Esophagus muscularis mucosa (tissue), 4 donors: ENCODE measurements at regions of chr1 and their contacts with region 1.

Region 1: GRCh38 chr1:170664828-170665612 is 1.1 kb downstream of the PRRX1 start:
- DNase-seq: no peak
- H3K4me3 ChIP-seq: peak overlapping the region; percentile 52 to 73 (median 58)
- H3K27ac ChIP-seq: peak overlapping the region; percentile 71 to 83 (median 78)
- H3K4me1 ChIP-seq: peaks cover 10 to 62% (median 48%) of the 10 kb centered on the region in 4 donors
- H3K27me3 ChIP-seq: peaks cover 0 to 100% (median 59%) of the 10 kb centered on the region in 4 donors
- CTCF ChIP-seq: no peak
- EP300 ChIP-seq: no peak
- POLR2A ChIP-seq: no peak

Region 2: DNA sequence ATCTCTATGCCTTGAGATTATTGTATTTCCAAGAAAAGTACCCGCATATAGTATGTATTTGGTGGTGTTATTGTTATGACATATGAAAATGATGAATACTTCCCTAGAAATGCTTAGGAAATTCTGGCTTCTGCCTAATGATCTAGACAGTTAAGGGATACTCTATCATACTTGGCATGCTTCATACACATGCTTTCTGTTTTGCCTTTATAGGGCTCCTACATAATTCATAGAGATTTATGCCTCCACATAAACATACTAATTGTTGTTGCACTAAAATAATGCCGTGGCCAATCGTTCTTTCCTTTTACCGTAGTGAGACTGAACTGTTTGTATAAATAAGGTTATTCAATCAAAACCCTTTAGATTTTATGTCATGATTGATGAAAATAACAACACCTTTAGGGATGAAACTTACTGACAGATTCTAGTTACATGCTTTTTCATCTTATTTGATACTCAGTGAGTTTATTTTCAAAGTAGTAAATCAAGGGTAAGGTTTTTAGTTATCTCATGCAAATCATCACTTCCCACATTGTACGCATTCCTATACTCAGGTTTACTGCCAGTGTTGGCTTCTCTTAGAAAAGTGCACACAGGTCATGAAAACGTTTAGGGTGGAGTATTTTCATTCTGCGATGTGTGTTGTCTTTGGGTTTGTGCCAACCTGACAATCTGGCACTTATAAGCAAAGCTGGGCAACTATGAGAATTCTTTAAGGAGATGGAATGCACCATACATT is 730.9 kb before region 1 on chr1:
- intact Hi-C with region 1: loop called (anchors 10 kb)
- DNase-seq: no peak
- H3K4me3 ChIP-seq: no peak overlapping the region
- H3K27ac ChIP-seq: no peak overlapping the region
- H3K4me1 ChIP-seq: peaks cover 0 to 21% (median 17%) of the 10 kb centered on the region in 4 donors
- H3K27me3 ChIP-seq: no peaks in the 10 kb centered on the region
- CTCF ChIP-seq: no peak
- EP300 ChIP-seq: no peak
- POLR2A ChIP-seq: no peak

Region 3: DNA sequence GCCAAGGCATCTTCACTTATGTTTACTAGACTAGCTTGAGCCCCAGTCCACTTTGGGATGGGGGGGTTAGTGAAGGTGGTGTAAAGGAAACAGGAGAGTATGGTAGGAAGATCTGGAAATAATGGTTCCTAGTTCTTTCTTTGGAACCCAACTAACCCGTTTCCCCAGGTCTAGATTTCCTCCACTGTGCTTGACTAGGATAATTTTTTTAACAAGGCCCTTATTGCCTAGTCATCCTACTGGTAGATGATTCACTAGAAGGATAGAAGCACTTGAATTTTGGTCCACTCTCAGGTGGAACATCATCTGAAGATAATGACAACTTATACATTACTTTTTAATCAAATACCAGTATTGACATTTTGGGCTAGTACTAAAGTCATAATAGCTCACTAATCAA is 911.1 kb after region 1 on chr1:
- intact Hi-C with region 1: no loop called
- DNase-seq: no peak
- H3K4me3 ChIP-seq: no peak overlapping the region
- H3K27ac ChIP-seq: no peak overlapping the region
- H3K4me1 ChIP-seq: no peaks in the 10 kb centered on the region
- H3K27me3 ChIP-seq: no peaks in the 10 kb centered on the region
- CTCF ChIP-seq: no peak
- EP300 ChIP-seq: no peak
- POLR2A ChIP-seq: no peak